WTC11 (cell line): ENCODE measurements at regions of chr5 and their contacts with region 1.

Region 1: GRCh38 chr5:178234750-178235587 is 2.4 kb upstream of the PHYKPL start:
- DNase-seq: peak; percentile 93
- ATAC-seq: peak; percentile 53
- H3K4me3 Mint-ChIP-seq: no peak overlapping the region
- H3K27ac Mint-ChIP-seq: no peak overlapping the region
- H3K4me1 Mint-ChIP-seq: peaks cover 24% of the 10 kb centered on the region
- H3K27me3 Mint-ChIP-seq: no peaks in the 10 kb centered on the region
- CTCF ChIP-seq: peak; percentile 78

Region 2: GRCh38 chr5:178090858-178091540 is 144.0 kb before region 1 on chr5:
- CTCF ChIA-PET with region 1: no interaction called
- POLR2A ChIA-PET with region 1: no interaction called
- DNase-seq: no peak
- ATAC-seq: no peak
- H3K4me3 Mint-ChIP-seq: no peak overlapping the region
- H3K27ac Mint-ChIP-seq: no peak overlapping the region
- H3K4me1 Mint-ChIP-seq: peaks cover 2% of the 10 kb centered on the region; the same call in 1 of the 2 replicates
- H3K27me3 Mint-ChIP-seq: peaks cover 8% of the 10 kb centered on the region; the same call in 1 of the 2 replicates
- CTCF ChIP-seq: no peak

Region 3: DNA sequence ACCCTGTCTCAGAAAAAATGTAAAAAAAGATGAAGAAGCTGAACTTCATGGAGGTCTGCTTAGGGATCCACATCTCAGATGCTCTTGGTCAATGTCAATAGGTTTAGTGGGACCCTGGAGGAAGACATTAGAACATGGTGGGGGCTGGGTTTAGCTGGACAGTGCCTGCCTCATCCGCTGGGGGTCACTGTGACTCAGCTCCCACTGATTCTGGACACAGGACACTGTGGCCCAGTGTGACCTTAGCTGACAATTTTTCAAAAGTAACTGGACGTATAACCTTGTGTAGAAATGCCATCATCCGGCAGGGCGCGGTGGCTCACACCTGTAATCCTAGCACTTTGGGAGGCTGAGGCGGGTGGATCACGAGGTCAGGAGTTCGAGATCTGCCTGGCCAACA is 38.0 kb before region 1 on chr5:
- CTCF ChIA-PET with region 1: interaction called, 10 read pairs
- POLR2A ChIA-PET with region 1: no interaction called
- DNase-seq: peak; percentile 60
- ATAC-seq: peak; percentile 76
- H3K4me3 Mint-ChIP-seq: no peak overlapping the region
- H3K27ac Mint-ChIP-seq: no peak overlapping the region
- H3K4me1 Mint-ChIP-seq: peaks cover 23% of the 10 kb centered on the region
- H3K27me3 Mint-ChIP-seq: peaks cover 18% of the 10 kb centered on the region
- CTCF ChIP-seq: peak; percentile 44

Region 4: GRCh38 chr5:178223828-178224335 is 11.1 kb before region 1 on chr5:
- CTCF ChIA-PET with region 1: interaction called, 13 read pairs
- POLR2A ChIA-PET with region 1: interaction called, 4 read pairs
- DNase-seq: peak; percentile 68
- ATAC-seq: peak; percentile 82
- H3K4me3 Mint-ChIP-seq: no peak overlapping the region
- H3K27ac Mint-ChIP-seq: no peak overlapping the region
- H3K4me1 Mint-ChIP-seq: peaks cover 18% of the 10 kb centered on the region
- H3K27me3 Mint-ChIP-seq: 0 out of 2 replicates have a peak, but pooled peaks cover 2% of the 10 kb centered on the region
- CTCF ChIP-seq: no peak

Region 5: GRCh38 chr5:178249191-178249989 is 14.4 kb after region 1 on chr5:
- CTCF ChIA-PET with region 1: interaction called, 24 read pairs
- POLR2A ChIA-PET with region 1: no interaction called
- DNase-seq: no peak
- ATAC-seq: no peak
- H3K4me3 Mint-ChIP-seq: no peak overlapping the region
- H3K27ac Mint-ChIP-seq: no peak overlapping the region
- H3K4me1 Mint-ChIP-seq: peaks cover 3% of the 10 kb centered on the region; the same call in 1 of the 2 replicates
- H3K27me3 Mint-ChIP-seq: no peaks in the 10 kb centered on the region
- CTCF ChIP-seq: no peak

Region 6: GRCh38 chr5:178279725-178280438 is 44.9 kb after region 1 on chr5:
- CTCF ChIA-PET with region 1: interaction called, 16 read pairs
- POLR2A ChIA-PET with region 1: interaction called, 3 read pairs
- DNase-seq: peak; percentile 95
- ATAC-seq: peak; percentile 91
- H3K4me3 Mint-ChIP-seq: peak overlapping the region; percentile 41
- H3K27ac Mint-ChIP-seq: peak overlapping the region; percentile 63; the same call in 1 of the 2 replicates
- H3K4me1 Mint-ChIP-seq: peaks cover 4% of the 10 kb centered on the region
- H3K27me3 Mint-ChIP-seq: peaks cover 8% of the 10 kb centered on the region
- CTCF ChIP-seq: peak; percentile 74

Region 7: GRCh38 chr5:178340187-178340586 is 105.2 kb after region 1 on chr5:
- CTCF ChIA-PET with region 1: no interaction called
- POLR2A ChIA-PET with region 1: no interaction called
- DNase-seq: no peak
- ATAC-seq: no peak
- H3K4me3 Mint-ChIP-seq: no peak overlapping the region
- H3K27ac Mint-ChIP-seq: no peak overlapping the region
- H3K4me1 Mint-ChIP-seq: peaks cover 11% of the 10 kb centered on the region
- H3K27me3 Mint-ChIP-seq: no peaks in the 10 kb centered on the region
- CTCF ChIP-seq: no peak

Region 8: GRCh38 chr5:178881073-178881472 is 646.1 kb after region 1 on chr5:
- CTCF ChIA-PET with region 1: no interaction called
- POLR2A ChIA-PET with region 1: no interaction called
- DNase-seq: no peak
- ATAC-seq: no peak
- H3K4me3 Mint-ChIP-seq: no peak overlapping the region
- H3K27ac Mint-ChIP-seq: no peak overlapping the region
- H3K4me1 Mint-ChIP-seq: no peaks in the 10 kb centered on the region
- H3K27me3 Mint-ChIP-seq: no peaks in the 10 kb centered on the region
- CTCF ChIP-seq: no peak